OCI-LY7 (cell line): ENCODE measurements at regions of chr6 and their contacts with region 1.

Region 1: DNA sequence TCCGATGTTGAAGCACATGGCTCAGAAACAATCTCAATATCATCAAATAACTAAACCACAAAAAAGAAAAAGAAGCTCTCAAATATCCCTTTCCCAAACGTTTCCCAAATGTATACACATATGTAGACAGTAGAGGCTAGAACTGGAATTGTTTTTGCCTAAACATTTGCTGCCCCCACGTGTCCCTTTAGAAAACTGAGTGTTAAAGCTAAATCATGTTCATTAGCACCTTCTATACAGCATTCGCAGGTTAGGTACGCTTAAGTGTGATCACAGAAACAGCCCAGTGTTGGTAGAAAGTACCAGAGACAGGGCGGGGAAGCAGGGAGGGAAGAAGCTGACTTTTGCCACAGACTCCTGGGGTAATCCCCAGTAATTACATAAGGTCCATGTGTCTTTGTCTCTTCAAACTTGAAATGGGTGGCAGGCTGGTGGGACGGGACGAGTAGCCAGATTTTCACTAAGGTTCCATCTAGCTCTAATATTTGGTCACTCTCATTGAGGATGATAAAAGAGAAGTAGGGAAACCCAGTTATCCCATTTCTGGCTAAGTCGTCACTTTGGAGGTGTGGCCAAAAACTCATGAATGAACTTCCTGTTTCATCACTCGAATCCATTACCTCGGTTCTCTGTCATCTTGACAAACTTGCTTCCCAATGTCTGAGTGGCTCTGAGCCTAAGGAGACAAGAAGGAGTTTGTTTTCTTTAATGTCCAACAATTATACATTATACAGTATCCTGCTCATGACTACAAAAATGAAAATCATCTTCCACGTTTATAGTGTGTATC is 15.0 kb upstream of the TFAP2A start:
- DNase-seq: peak; percentile 64
- H3K4me3 ChIP-seq: peak overlapping the region; percentile 31
- H3K27ac ChIP-seq: no peak overlapping the region
- H3K4me1 ChIP-seq: peaks cover 23% of the 10 kb centered on the region
- CTCF ChIP-seq: peak; percentile 92

Region 2: GRCh38 chr6:9250852-9251251 is 1179.0 kb before region 1 on chr6:
- CTCF ChIA-PET with region 1: no interaction called
- POLR2A ChIA-PET with region 1: no interaction called
- intact Hi-C with region 1: loop called (anchors 5 kb)
- DNase-seq: peak; percentile 3
- H3K4me3 ChIP-seq: no peak overlapping the region
- H3K27ac ChIP-seq: no peak overlapping the region
- H3K4me1 ChIP-seq: no peaks in the 10 kb centered on the region
- CTCF ChIP-seq: peak; percentile 68

Region 3: DNA sequence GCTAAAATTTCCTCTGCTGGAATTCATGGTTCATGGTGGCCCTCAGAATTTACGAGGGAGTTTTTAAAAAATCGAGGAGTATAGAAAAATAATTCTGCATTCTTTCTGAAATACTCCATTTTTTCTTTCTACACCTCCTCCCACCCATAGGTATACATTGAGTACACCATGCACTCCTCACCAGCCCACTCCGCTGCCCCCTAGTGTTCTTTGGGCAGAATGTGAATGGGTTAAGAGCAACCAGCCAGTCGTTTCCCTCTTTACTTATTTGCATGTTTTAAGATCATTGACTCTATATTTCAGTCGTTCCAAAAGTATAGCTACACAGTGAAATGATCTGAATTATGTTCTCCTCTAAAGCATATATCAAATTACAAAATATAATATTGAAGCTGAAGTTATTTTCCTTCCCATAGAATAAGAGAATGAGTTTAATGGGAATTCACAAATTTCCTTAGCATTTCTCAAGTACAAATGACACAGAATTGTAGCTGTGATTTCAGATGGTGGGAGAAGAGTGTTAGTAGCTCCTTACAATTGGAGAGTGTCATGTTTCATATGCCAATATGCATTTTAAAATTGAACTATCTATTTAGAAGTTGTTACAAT is 1016.8 kb before region 1 on chr6:
- CTCF ChIA-PET with region 1: no interaction called
- POLR2A ChIA-PET with region 1: no interaction called
- intact Hi-C with region 1: loop called (anchors 10 kb)
- DNase-seq: peak; percentile 29
- H3K4me3 ChIP-seq: no peak overlapping the region
- H3K27ac ChIP-seq: no peak overlapping the region
- H3K4me1 ChIP-seq: no peaks in the 10 kb centered on the region
- CTCF ChIP-seq: peak; percentile 82

Region 4: GRCh38 chr6:9540534-9541126 is 889.2 kb before region 1 on chr6:
- CTCF ChIA-PET with region 1: no interaction called
- POLR2A ChIA-PET with region 1: no interaction called
- intact Hi-C with region 1: loop called (anchors 5 kb)
- DNase-seq: peak; percentile 37
- H3K4me3 ChIP-seq: no peak overlapping the region
- H3K27ac ChIP-seq: no peak overlapping the region
- H3K4me1 ChIP-seq: no peaks in the 10 kb centered on the region
- CTCF ChIP-seq: peak; percentile 94

Region 5: GRCh38 chr6:10030942-10031537 is 398.8 kb before region 1 on chr6:
- CTCF ChIA-PET with region 1: no interaction called
- POLR2A ChIA-PET with region 1: interaction called, 3 read pairs
- intact Hi-C with region 1: loop called (anchors 1 kb)
- DNase-seq: peak; percentile 29
- H3K4me3 ChIP-seq: no peak overlapping the region
- H3K27ac ChIP-seq: no peak overlapping the region
- H3K4me1 ChIP-seq: no peaks in the 10 kb centered on the region
- CTCF ChIP-seq: peak; percentile 93

Region 6: DNA sequence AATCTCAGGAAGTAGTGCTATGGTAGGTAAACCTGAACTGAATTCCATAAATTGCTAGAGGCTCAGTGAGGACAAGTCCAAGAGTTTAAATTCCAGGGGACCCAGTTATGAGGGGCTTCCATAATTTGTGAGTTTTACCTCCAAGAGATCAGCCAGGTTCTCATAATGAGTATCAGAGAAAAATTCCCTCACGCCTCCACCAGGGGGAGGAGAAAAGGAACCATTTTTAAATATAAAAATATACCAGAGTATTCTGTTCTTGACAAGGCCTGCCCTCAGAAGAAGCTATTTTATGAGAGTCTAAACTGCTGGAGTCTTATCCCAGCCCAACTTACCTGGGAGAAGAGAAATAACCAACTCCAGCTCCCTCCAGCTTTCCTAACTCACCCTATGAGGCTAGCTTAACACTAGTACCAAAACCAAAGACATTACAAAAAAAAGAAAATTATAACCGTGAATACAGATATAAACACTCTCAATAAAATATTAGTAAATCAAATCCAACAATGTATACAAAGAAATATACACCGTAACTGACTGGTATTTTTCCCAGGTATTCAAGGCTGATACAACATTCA is 173.6 kb before region 1 on chr6:
- CTCF ChIA-PET with region 1: interaction called, 3 read pairs
- POLR2A ChIA-PET with region 1: no interaction called
- intact Hi-C with region 1: loop called (anchors 1 kb)
- DNase-seq: peak; percentile 37
- H3K4me3 ChIP-seq: no peak overlapping the region
- H3K27ac ChIP-seq: no peak overlapping the region
- H3K4me1 ChIP-seq: no peaks in the 10 kb centered on the region
- CTCF ChIP-seq: peak; percentile 77